Right cardiac atrium (tissue), 5 donors: ENCODE measurements at regions of chr12 and their contacts with region 1.

Region 1: GRCh38 chr12:117212563-117213190 is 22.4 kb upstream of the FBXO21 start:
- DNase-seq: peak; percentile 66 to 86 (median 74)
- ATAC-seq: peak; percentile 87 to 88
- H3K4me3 ChIP-seq: no peak overlapping the region
- H3K27ac ChIP-seq: no peak overlapping the region
- H3K4me1 ChIP-seq: no peaks in the 10 kb centered on the region
- H3K27me3 ChIP-seq: no peaks in the 10 kb centered on the region

Region 2: GRCh38 chr12:117587631-117588287 is 375.1 kb after region 1 on chr12:
- intact Hi-C with region 1: loop called in 2 of 4 experiments (anchors 10 kb)
- DNase-seq: peak; percentile 32 to 76 (median 73)
- ATAC-seq: peak; percentile 51 to 79
- H3K4me3 ChIP-seq: no peak overlapping the region
- H3K27ac ChIP-seq: no peak overlapping the region
- H3K4me1 ChIP-seq: no peaks in the 10 kb centered on the region
- H3K27me3 ChIP-seq: no peaks in the 10 kb centered on the region

Region 3: GRCh38 chr12:117596968-117597367 is 384.3 kb after region 1 on chr12:
- intact Hi-C with region 1: loop called in 1 of 4 experiments (anchors 10 kb)
- DNase-seq: no peak
- ATAC-seq: no peak
- H3K4me3 ChIP-seq: no peak overlapping the region
- H3K27ac ChIP-seq: no peak overlapping the region
- H3K4me1 ChIP-seq: no peaks in the 10 kb centered on the region
- H3K27me3 ChIP-seq: no peaks in the 10 kb centered on the region

Region 4: DNA sequence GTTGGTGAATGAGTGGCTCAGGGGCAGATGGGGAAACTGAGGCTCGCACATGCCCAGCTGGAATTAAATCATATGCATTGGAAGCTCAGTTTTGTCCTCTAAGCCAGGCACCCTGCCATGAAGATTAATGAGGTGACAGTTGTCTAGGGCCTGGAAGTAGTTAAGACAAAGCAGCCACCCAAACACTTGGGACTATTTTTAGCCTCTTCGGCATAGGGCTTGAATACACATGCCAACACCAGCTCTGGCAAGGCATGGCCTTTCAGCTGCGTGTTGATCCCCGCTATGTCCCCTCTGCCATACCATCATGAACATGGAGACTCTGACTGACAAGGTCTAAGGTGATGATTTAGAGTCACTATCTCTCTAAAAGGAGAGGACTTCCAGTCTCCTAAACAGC is 505.9 kb after region 1 on chr12:
- intact Hi-C with region 1: no loop called
- DNase-seq: no peak
- ATAC-seq: peak; percentile 69 to 73
- H3K4me3 ChIP-seq: no peak overlapping the region
- H3K27ac ChIP-seq: no peak overlapping the region
- H3K4me1 ChIP-seq: no peaks in the 10 kb centered on the region
- H3K27me3 ChIP-seq: no peaks in the 10 kb centered on the region